GM12878 (cell line): ENCODE measurements at regions of chr3 and their contacts with region 1.

Region 1: GRCh38 chr3:143831208-143831607 is 17.1 kb downstream of the SLC9A9 start:
- DNase-seq: no peak
- ATAC-seq: peak; percentile 54
- H3K4me3 ChIP-seq: peak overlapping the region; percentile 28; the same call in 1 of the 2 replicates
- H3K27ac ChIP-seq: peak overlapping the region; percentile 76
- H3K4me1 ChIP-seq: peaks cover 12% of the 10 kb centered on the region
- H3K27me3 ChIP-seq: no peaks in the 10 kb centered on the region
- CTCF ChIP-seq: no peak
- EP300 ChIP-seq: no peak
- POLR2A ChIP-seq: no peak
- RAD21 ChIP-seq: no peak

Region 2: GRCh38 chr3:143850877-143851276 is 19.7 kb after region 1 on chr3:
- CTCF ChIA-PET with region 1: no interaction called
- POLR2A ChIA-PET with region 1: no interaction called
- RAD21 ChIA-PET with region 1: no interaction called
- SMC1A ChIA-PET with region 1: no interaction called
- in situ Hi-C with region 1: no loop called
- intact Hi-C with region 1: loop called (anchors 1 kb)
- DNase-seq: no peak
- ATAC-seq: peak; percentile 52
- H3K4me3 ChIP-seq: no peak overlapping the region
- H3K27ac ChIP-seq: peak overlapping the region; percentile 70; the same call in 1 of the 2 replicates
- H3K4me1 ChIP-seq: peaks cover 29% of the 10 kb centered on the region
- H3K27me3 ChIP-seq: no peaks in the 10 kb centered on the region
- CTCF ChIP-seq: no peak
- EP300 ChIP-seq: no peak
- POLR2A ChIP-seq: no peak
- RAD21 ChIP-seq: no peak

Region 3: DNA sequence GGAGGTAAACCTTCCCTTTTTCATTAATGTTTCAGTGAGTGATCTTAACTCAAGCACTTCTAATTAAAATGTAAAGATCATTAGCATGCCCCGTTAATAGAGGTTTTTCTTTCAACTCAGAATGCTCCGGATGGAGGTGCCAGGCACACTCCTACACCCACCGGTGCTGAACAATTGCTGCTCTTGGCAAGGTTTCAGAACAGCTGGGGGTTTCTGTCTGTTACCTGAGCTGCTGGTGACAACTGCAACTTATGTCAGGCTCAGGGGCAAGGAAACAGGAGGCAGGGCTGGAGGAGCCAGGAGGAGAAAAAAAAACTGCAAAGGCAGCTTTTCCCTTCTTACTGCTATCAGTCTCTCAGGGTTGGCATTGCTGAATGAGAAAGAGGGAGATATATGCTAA is 390.6 kb after region 1 on chr3:
- CTCF ChIA-PET with region 1: no interaction called
- POLR2A ChIA-PET with region 1: no interaction called
- RAD21 ChIA-PET with region 1: no interaction called
- SMC1A ChIA-PET with region 1: no interaction called
- in situ Hi-C with region 1: no loop called
- intact Hi-C with region 1: no loop called
- DNase-seq: no peak
- ATAC-seq: no peak
- H3K4me3 ChIP-seq: no peak overlapping the region
- H3K27ac ChIP-seq: no peak overlapping the region
- H3K4me1 ChIP-seq: no peaks in the 10 kb centered on the region
- H3K27me3 ChIP-seq: no peaks in the 10 kb centered on the region
- CTCF ChIP-seq: no peak
- EP300 ChIP-seq: no peak
- POLR2A ChIP-seq: no peak
- RAD21 ChIP-seq: no peak